Caco-2 (cell line): ENCODE measurements at regions of chr4 and their contacts with region 1.

Region 1: GRCh38 chr4:82373816-82374625 is at the start of gene HNRNPD:
- DNase-seq: peak; percentile 99
- H3K4me3 ChIP-seq: peak within 1 kb of the TSS; percentile 92
- H3K4me3 Mint-ChIP-seq: peak within 1 kb of the TSS; percentile 98
- H3K27ac Mint-ChIP-seq: peak within 1 kb of the TSS; percentile 98
- H3K4me1 ChIP-seq: peaks cover 15% of the 10 kb centered on the region
- H3K4me1 Mint-ChIP-seq: no peaks in the 10 kb centered on the region
- H3K27me3 ChIP-seq: no peaks in the 10 kb centered on the region
- H3K27me3 Mint-ChIP-seq: no peaks in the 10 kb centered on the region
- CTCF ChIP-seq: no peak
- total RNA-seq, gene HNRNPD: 405 and 408 TPM in 2 replicates

Region 2: DNA sequence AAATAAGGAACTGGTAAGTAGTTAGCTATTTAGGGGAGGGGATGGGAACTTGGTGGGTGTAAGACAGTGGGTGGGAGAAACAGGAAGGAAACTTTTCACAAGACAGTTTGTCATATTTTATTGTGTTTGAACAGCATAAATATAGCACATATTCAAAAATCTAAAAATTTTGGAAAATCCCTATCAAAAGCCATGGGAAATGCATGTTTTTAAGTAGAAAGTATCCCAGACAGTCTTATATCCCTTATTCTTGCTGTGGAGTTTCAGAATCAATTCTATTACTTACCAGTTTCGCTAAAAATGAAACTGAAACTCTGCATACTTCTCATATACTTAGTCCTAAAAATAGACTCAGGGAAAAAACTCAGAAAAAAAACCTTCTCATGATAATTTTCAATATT is 880.0 kb before region 1 on chr4:
- CTCF ChIA-PET with region 1: no interaction called
- POLR2A ChIA-PET with region 1: no interaction called
- intact Hi-C with region 1: no loop called
- DNase-seq: no peak
- H3K4me3 ChIP-seq: no peak overlapping the region
- H3K4me3 Mint-ChIP-seq: no peak overlapping the region
- H3K27ac Mint-ChIP-seq: no peak overlapping the region
- H3K4me1 ChIP-seq: peaks cover 34% of the 10 kb centered on the region
- H3K4me1 Mint-ChIP-seq: peaks cover 28% of the 10 kb centered on the region
- H3K27me3 ChIP-seq: no peaks in the 10 kb centered on the region
- H3K27me3 Mint-ChIP-seq: no peaks in the 10 kb centered on the region
- CTCF ChIP-seq: no peak

Region 3: GRCh38 chr4:82403725-82404124 is 29.7 kb after region 1 on chr4:
- CTCF ChIA-PET with region 1: no interaction called
- POLR2A ChIA-PET with region 1: interaction called, 3 read pairs
- intact Hi-C with region 1: loop called (anchors 2 kb)
- DNase-seq: no peak
- H3K4me3 ChIP-seq: no peak overlapping the region
- H3K4me3 Mint-ChIP-seq: no peak overlapping the region
- H3K27ac Mint-ChIP-seq: no peak overlapping the region
- H3K4me1 ChIP-seq: no peaks in the 10 kb centered on the region; the same call in 1 of the 2 replicates
- H3K4me1 Mint-ChIP-seq: peaks cover 7% of the 10 kb centered on the region
- H3K27me3 ChIP-seq: no peaks in the 10 kb centered on the region
- H3K27me3 Mint-ChIP-seq: no peaks in the 10 kb centered on the region
- CTCF ChIP-seq: no peak

Region 4: GRCh38 chr4:82423245-82424054 is 49.4 kb after region 1 on chr4:
- CTCF ChIA-PET with region 1: interaction called, 3 read pairs
- POLR2A ChIA-PET with region 1: interaction called, 59 read pairs
- intact Hi-C with region 1: loop called (anchors 1 kb)
- DNase-seq: no peak
- H3K4me3 ChIP-seq: no peak overlapping the region
- H3K4me3 Mint-ChIP-seq: no peak overlapping the region
- H3K27ac Mint-ChIP-seq: no peak overlapping the region
- H3K4me1 ChIP-seq: peaks cover 11% of the 10 kb centered on the region
- H3K4me1 Mint-ChIP-seq: peaks cover 6% of the 10 kb centered on the region
- H3K27me3 ChIP-seq: no peaks in the 10 kb centered on the region
- H3K27me3 Mint-ChIP-seq: no peaks in the 10 kb centered on the region
- CTCF ChIP-seq: no peak

Region 5: DNA sequence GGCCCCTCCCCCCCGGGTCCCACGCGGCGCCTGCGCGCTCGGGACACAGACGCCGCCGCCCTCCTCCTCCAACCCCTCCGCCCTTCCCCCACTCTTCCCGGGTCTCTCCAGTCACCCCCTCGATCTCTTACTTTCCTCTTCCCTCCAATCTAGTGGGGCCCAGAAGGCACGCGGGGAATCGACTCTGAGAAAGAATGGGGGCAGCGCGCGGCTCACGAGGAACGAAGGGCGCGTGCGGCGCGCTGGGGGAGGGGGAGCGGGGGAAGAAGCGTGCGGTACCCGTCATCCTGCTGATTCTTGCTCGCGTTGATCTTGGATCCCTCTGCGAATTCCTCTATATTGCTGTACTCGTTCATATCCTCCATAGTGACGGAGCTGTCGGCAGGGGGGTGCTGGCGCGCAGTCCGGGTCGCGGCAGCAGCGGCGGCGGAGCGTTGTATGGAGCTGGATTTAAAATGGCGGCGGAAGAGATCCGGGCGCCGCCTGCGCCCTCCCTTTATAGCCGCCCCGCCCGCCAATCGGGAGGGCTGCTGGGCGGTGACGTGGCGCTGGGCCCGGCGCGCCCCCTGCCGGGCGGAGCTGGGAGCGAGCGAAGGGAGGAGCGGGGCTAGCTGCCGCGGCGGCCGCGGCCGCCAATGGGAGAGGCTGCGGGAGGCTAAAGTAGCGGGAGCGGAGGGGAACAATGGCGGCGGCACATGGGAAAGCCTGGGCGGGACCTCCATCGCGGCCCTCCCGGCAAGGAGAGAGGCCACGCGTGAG is 55.1 kb after region 1 on chr4:
- CTCF ChIA-PET with region 1: interaction called, 12 read pairs
- POLR2A ChIA-PET with region 1: interaction called, 59 read pairs
- intact Hi-C with region 1: loop called (anchors 1 kb)
- DNase-seq: peak; percentile 89 to 96
- H3K4me3 ChIP-seq: peak overlapping the region; percentile 98
- H3K4me3 Mint-ChIP-seq: peak overlapping the region; percentile 89
- H3K27ac Mint-ChIP-seq: peak overlapping the region; percentile 99
- H3K4me1 ChIP-seq: peaks cover 11% of the 10 kb centered on the region
- H3K4me1 Mint-ChIP-seq: peaks cover 7% of the 10 kb centered on the region
- H3K27me3 ChIP-seq: no peaks in the 10 kb centered on the region
- H3K27me3 Mint-ChIP-seq: no peaks in the 10 kb centered on the region
- CTCF ChIP-seq: peak; percentile 51 to 93